ENCODE measurements at regions of chr5 and their contacts with region 1.

Region 1: DNA sequence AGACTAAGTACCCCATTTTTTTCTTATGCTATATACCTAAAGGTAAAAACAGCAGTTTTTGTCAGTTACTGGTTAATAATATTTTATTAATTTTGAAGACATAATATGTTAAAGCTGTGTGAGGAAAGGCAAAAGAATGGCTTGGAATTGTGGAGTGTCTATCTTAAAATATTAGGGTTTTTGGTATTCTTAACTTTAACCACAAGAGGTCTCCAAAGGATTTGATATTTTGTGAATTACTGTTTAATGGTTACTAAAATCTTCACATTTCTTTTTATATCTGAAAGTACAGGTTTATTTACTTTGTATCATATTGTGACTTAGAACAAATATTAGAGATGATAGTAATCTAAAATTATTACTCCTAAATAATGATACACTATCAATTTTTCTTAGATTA is 32.0 kb upstream of the DHFR start:
- DNase-seq: peak; percentile 25 to 46 (median 44)
- H3K4me3 ChIP-seq: no peak overlapping the region
- H3K27ac ChIP-seq: no peak overlapping the region
- H3K4me1 ChIP-seq: no peaks in the 10 kb centered on the region
- H3K27me3 ChIP-seq: no peaks in the 10 kb centered on the region

Region 2: DNA sequence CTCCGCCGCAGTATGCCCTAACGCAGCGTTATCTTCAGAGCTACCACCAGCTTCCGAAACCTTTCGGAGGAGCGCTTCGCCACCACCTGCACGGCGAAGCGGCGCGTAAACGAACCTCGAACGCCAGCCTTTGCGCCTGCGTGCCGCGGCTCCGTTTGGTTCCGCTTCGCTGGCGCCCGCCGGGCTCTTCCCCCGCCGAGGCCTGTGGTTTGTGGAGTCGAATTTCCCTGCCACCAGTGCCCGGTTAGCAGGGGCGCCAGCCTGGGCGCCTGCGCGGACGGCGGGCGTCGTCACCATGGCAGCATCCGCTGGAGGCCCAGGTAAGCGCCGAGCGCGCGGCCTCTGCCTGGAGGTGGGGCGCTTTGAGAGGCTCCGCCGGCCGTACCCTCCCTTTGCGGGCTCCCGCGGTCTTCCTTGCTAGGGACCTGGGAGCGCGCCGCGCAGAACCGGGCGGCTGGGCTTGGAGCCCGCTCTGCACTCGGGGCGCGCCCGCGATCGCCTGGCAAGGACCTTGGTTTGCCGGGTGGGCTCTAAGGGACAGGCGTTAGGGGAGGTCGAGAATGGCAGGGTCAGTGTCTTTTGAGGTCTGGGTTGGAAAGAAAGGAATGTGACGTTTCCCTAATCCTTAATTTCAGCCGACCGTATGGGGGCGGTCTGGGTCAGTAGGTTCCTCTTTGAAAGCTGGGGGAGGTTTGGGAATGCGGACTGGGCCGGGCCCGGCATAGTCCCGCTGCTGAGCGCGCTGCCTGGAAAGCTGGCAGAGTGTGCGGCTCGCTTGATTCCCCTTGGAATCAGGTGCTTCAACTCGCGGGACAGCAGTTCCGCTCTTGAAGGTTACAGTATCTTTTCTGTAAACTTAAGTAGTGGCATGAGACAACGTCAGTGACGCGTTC is 198.7 kb before region 1 on chr5 and contains the start of gene FAM151B:
- CTCF ChIA-PET with region 1: no interaction called
- POLR2A ChIA-PET with region 1: no interaction called
- DNase-seq: peak; percentile 87 to 94 (median 94)
- H3K4me3 ChIP-seq: peak within 1 kb of the TSS; percentile 65 to 89 (median 80)
- H3K27ac ChIP-seq: peak within 1 kb of the TSS in 1 of 2 experiments; percentile 58
- H3K4me1 ChIP-seq: peaks cover 0 to 13% (median 9%) of the 10 kb centered on the region in 4 experiments
- H3K27me3 ChIP-seq: no peaks in the 10 kb centered on the region

Region 3: GRCh38 chr5:80608731-80609130 is 78.0 kb before region 1 on chr5:
- CTCF ChIA-PET with region 1: no interaction called
- POLR2A ChIA-PET with region 1: no interaction called
- DNase-seq: peak in 1 of 3 donors; percentile 13
- H3K4me3 ChIP-seq: no peak overlapping the region
- H3K27ac ChIP-seq: no peak overlapping the region
- H3K4me1 ChIP-seq: peaks cover 0 to 5% (median 0%) of the 10 kb centered on the region in 4 experiments
- H3K27me3 ChIP-seq: no peaks in the 10 kb centered on the region

Region 4: GRCh38 chr5:81165493-81166119 is 478.8 kb after region 1 on chr5:
- CTCF ChIA-PET with region 1: interaction called, 51 read pairs
- POLR2A ChIA-PET with region 1: no interaction called
- DNase-seq: peak; percentile 46 to 72 (median 63)
- H3K4me3 ChIP-seq: no peak overlapping the region
- H3K27ac ChIP-seq: no peak overlapping the region
- H3K4me1 ChIP-seq: no peaks in the 10 kb centered on the region
- H3K27me3 ChIP-seq: no peaks in the 10 kb centered on the region

Region 5: GRCh38 chr5:81194633-81195333 is 508.0 kb after region 1 on chr5:
- CTCF ChIA-PET with region 1: interaction called, 12 read pairs
- POLR2A ChIA-PET with region 1: no interaction called
- DNase-seq: peak; percentile 77 to 84 (median 81)
- H3K4me3 ChIP-seq: peak overlapping the region in 1 of 7 experiments; percentile 43
- H3K27ac ChIP-seq: no peak overlapping the region
- H3K4me1 ChIP-seq: peaks cover 0 to 5% (median 3%) of the 10 kb centered on the region in 4 experiments
- H3K27me3 ChIP-seq: peaks cover 0 to 4% (median 2%) of the 10 kb centered on the region in 5 experiments

Measured in common myeloid progenitor, CD34-positive (primary cell).